Gastrocnemius medialis (tissue), 4 donors: ENCODE measurements at regions of chr16 and their contacts with region 1.

Region 1: DNA sequence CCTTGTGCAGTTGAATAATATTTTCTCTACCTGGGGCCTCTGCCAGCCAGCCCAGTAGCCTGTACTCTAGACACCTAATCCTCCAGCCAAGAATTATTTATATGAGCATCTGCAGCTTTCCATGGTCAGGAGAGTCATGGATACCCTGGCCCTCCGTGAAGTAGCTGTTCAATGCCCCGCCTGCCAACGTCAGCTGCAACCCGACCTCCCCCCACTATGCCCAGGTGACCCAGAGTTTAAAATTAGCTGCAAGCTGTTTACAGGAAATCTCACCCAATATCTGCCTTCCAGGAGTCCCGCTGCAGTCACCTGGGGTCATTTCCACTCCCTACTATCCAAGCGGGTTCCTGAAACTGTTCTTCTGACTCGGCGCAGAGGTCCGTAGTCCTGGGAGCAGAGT is 12.3 kb downstream of the SDR42E2 start:
- DNase-seq: peak in 1 of 2 donors; percentile 31
- ATAC-seq: peak; percentile 69 to 79
- H3K4me3 ChIP-seq: peak overlapping the region in 1 of 4 donors; percentile 9
- H3K27ac ChIP-seq: peak overlapping the region; percentile 45 to 69 (median 64)
- H3K4me1 ChIP-seq: peaks cover 4 to 7% of the 10 kb centered on the region in 2 donors
- H3K27me3 ChIP-seq: no peaks in the 10 kb centered on the region
- CTCF ChIP-seq: no peak
- POLR2A ChIP-seq: no peak

Region 2: DNA sequence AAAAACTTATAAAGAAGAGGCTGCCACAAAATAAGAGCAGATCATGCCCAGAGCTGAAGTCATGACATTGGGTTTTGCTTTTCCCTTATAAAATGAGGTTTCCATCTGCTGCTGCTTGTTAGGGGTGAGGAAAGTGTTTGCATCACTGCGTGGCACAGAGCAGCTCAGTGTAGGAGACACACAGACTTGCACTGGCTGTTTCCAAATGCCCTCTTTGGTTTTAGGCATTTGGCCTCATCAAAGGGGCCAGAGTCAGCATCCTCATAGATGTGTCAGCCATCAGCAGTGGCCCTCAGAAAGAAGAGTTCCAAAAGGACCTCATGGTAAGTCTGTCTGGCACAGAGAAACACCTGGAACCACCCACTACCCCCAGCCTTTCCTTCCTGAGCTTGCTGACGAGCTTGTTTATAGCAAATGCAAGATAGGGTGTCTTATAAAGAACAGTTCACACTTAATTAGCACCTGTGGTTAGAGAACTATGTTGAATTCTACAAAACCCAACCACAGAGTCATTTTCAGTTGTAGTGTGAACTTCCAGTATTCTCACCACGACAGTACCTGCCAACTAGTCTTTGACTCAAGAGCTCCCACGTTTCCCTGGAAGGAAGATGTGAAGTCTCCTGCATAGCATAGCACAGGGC is 65.3 kb before region 1 on chr16:
- in situ Hi-C with region 1: loop called in 1 of 4 experiments (anchors 10 kb)
- intact Hi-C with region 1: no loop called
- DNase-seq: no peak
- ATAC-seq: no peak
- H3K4me3 ChIP-seq: no peak overlapping the region
- H3K27ac ChIP-seq: no peak overlapping the region
- H3K4me1 ChIP-seq: no peaks in the 10 kb centered on the region
- H3K27me3 ChIP-seq: no peaks in the 10 kb centered on the region
- CTCF ChIP-seq: no peak
- POLR2A ChIP-seq: no peak